Activated CD4-positive, alpha-beta T cell treated with anti-CD3 and anti-CD28 coated beads, Interleukin-2, amount 10 ng/mL, durations not matched to agents 24 days and 14 days (primary cell): ENCODE measurements at regions of chr11 and their contacts with region 1.

Region 1: DNA sequence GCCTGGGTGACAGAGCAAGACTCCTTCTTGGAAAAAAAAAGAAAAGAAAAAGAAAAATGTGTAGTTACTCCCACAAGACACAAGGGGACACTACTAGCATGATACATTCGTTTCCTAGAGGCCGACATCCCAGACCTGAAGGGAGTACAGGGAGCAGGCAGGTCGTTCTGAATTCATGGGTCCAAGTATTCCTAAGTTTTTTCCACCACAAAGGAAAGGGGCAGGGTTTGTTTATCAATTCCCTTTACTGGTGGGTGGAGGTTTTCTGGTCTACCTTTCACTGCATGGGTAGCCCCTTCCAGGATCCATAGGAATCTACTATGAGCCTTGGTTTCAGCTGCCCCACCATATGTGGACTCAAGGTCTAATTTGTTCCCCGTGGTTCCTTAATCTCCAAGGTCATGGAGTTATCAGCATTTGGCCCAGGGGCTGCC is 11.8 kb downstream of the TIGD3 start:
- DNase-seq: peak; percentile 80
- H3K4me3 Mint-ChIP-seq: no peak overlapping the region
- H3K27ac Mint-ChIP-seq: no peak overlapping the region
- H3K4me1 Mint-ChIP-seq: peaks cover 6% of the 10 kb centered on the region
- H3K27me3 Mint-ChIP-seq: peaks cover 3% of the 10 kb centered on the region

Region 2: GRCh38 chr11:65354265-65355012 is 11.9 kb before region 1 on chr11 and contains the start of gene TIGD3:
- intact Hi-C with region 1: no loop called
- DNase-seq: peak; percentile 99
- H3K4me3 Mint-ChIP-seq: peak within 1 kb of the TSS; percentile 93
- H3K27ac Mint-ChIP-seq: peak within 1 kb of the TSS; percentile 85
- H3K4me1 Mint-ChIP-seq: peaks cover 11% of the 10 kb centered on the region
- H3K27me3 Mint-ChIP-seq: peaks cover 6% of the 10 kb centered on the region
- total RNA-seq, gene TIGD3: 1.2 and 1.6 TPM in 2 replicates

Region 3: DNA sequence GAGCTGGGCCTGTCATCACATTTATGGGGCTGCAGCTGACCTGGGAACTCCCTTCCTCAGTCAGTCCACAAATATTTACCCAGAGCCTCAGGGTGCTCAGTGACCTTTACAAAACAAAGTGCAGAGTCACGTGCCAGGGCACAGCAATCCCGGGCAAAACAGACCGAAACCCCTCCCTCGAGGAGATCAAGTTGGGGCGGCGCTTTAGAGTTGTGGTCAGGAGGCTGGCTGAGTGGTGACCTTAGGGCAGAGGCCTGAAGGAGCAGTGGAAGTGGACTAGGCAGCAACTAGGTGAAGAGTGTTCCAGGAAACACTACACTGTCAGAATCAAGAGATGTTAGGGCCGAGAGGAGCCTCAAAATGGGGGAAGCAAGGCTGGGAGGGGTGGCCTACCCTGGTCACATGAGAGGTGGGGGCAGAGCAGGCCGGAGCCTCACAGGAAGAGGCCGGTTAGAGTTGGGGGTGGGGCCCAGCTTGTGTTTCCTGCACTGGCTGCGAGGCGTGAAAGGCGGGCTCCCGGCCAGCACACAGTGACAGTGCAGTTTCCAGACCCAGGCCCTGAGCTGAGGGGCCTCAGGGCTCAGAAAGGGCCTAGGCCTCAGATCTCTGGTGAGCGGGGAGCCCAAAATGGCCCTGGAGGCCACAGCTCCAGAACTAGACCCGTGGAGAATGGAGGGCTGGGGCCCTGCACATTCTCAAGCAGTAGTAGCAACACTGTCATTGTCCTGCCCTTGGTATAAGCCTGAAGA is 52.5 kb after region 1 on chr11:
- intact Hi-C with region 1: loop called (anchors 1 kb)
- DNase-seq: peak; percentile 96
- H3K4me3 Mint-ChIP-seq: peak overlapping the region; percentile 100
- H3K27ac Mint-ChIP-seq: peak overlapping the region; percentile 100
- H3K4me1 Mint-ChIP-seq: peaks cover 55% of the 10 kb centered on the region
- H3K27me3 Mint-ChIP-seq: peaks cover 5% of the 10 kb centered on the region

Region 4: GRCh38 chr11:65432686-65433582 is 66.6 kb after region 1 on chr11:
- intact Hi-C with region 1: loop called (anchors 1 kb)
- DNase-seq: no peak
- H3K4me3 Mint-ChIP-seq: peak overlapping the region; percentile 54
- H3K27ac Mint-ChIP-seq: peak overlapping the region; percentile 76
- H3K4me1 Mint-ChIP-seq: peaks cover 79% of the 10 kb centered on the region
- H3K27me3 Mint-ChIP-seq: no peaks in the 10 kb centered on the region

Region 5: DNA sequence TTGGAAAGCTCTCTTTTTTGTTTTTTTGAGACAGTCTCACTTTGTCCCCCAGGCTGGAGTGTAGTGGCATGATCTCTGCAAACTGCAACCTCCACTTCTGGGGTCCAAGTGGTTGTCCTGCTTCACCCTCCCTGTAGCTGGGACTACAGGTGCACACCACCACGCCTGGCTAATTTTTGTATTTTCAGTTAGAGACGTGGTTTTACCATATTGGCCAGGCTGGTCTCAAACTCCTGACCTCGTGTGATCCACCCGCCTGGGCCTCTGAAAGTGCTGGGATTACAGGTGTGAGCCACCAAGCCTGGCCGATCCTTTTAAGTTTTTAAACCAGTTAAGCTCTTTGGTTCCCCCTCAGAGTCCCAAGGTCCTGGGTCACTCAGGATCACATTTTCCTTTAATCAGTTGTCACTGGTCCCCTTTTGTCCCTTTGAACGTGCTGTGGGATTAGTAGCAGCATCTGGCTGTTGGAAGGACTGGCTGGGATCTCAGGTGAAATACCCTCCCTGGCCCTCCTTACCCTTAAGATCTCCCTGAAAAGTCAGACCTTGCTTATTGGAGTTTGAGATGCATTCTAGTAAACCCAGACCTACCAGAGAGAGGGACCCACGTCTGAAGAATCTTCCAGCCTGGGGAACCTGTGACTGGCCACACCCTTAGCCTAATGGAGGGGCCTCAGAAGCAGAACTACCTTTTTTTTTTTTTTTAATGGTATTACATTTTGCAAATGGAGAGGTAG is 140.6 kb after region 1 on chr11:
- intact Hi-C with region 1: loop called (anchors 1 kb)
- DNase-seq: peak; percentile 81
- H3K4me3 Mint-ChIP-seq: no peak overlapping the region
- H3K27ac Mint-ChIP-seq: peak overlapping the region; percentile 92
- H3K4me1 Mint-ChIP-seq: peaks cover 55% of the 10 kb centered on the region
- H3K27me3 Mint-ChIP-seq: no peaks in the 10 kb centered on the region

Region 6: GRCh38 chr11:65524741-65525545 is 158.6 kb after region 1 on chr11 and contains the start of gene SCYL1:
- intact Hi-C with region 1: no loop called
- DNase-seq: peak; percentile 91
- H3K4me3 Mint-ChIP-seq: peak within 1 kb of the TSS; percentile 91
- H3K27ac Mint-ChIP-seq: peak within 1 kb of the TSS; percentile 93
- H3K4me1 Mint-ChIP-seq: peaks cover 52% of the 10 kb centered on the region
- H3K27me3 Mint-ChIP-seq: no peaks in the 10 kb centered on the region
- total RNA-seq, gene SCYL1: 94.2 and 95.8 TPM in 2 replicates